ENCODE measurements at regions of chr10 and their contacts with region 1.

Region 1: DNA sequence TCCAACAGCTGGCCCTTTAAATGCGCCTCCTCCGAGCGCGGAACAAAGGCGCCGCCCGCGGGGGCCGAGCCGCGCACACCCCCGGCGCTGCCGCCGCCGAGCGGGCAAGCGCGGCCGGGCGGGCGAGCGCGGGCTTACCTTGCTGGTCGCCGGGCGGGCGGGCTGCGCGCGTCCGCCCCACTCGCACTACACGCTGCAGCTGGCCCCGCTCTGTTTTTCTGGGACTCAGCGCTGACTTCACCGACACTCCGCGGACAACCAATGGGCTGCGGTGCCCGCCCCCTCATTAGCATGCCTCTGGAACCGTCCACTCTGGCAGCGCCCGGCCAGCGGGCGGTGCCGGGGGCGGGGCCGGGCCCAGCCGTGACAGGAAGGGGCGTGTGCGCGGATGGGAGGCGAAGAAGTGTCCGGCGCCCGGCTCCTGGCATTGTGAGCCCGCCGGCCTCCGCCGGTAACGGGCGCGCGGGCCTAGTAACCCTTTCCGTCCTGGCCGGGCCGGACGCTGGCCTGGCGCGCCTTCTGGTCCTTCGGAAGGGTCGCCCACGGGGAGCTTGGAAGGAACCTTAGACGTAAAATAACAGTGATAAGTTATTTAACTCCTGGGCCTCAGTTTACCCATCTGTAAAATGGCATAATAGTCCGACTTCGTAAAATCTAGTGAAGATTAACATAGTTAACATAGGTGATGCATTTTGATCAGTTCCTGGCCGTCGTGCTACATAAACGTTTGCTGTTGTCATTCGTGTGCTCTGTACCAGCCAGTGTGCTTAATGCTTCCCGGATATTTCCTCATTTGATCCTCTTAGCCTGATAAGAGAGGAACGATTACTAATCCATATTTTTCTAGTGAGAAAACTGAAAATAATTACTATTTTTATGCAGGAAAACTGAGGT is at the start of gene SORBS1:
- DNase-seq: peak; percentile 98
- H3K4me3 ChIP-seq: peak within 1 kb of the TSS; percentile 74 to 94 (median 88)
- H3K27ac ChIP-seq: peak within 1 kb of the TSS; percentile 55
- H3K4me1 ChIP-seq: peaks cover 2% of the 10 kb centered on the region
- H3K27me3 ChIP-seq: peaks cover 2 to 7% of the 10 kb centered on the region in 2 experiments
- CTCF ChIP-seq: no peak
- POLR2A ChIP-seq: peak; percentile 65
- total RNA-seq, gene SORBS1: 3.2 and 7.9 TPM in 2 replicates

Region 2: DNA sequence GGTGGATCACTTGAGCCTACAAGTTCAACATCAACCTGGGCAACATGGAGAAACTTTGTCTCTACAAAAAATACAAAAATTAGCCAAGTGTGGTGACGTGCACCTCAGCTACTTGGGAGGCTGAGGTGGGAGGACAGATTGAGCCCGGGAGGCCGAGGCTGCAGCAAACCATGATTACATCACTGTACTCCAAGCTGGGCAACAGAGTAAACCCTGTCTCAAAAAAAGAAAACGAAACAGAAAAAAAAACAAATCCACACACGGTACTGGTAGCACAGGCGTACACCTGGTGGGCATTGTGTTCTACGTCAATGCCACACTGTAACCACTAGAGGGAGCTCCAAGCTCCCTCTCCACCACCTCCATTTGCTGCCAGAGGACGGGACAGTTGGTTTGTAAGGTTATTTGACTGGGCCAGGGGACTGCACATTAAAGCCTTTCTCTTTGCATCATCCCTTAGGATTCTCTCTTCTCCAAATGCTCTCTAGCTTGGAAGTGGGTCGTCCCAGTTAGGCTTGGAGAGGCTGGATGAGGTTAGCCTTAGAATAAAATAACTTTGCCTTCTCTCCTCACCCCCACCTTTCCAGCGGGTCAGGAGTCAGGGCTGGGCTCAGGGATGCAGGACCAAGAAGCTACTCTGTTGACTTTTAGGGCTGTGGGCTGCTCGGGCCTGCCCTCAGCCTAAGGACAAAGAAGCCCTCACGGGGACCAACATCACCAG is 131.0 kb before region 1 on chr10:
- CTCF ChIA-PET with region 1: interaction called, 6 read pairs
- POLR2A ChIA-PET with region 1: no interaction called
- dilution Hi-C with region 1: no loop called
- intact Hi-C with region 1: loop called (anchors 1 kb)
- DNase-seq: peak; percentile 61
- H3K4me3 ChIP-seq: no peak overlapping the region
- H3K27ac ChIP-seq: no peak overlapping the region
- H3K4me1 ChIP-seq: peaks cover 5% of the 10 kb centered on the region
- H3K27me3 ChIP-seq: peaks cover 0 to 2% of the 10 kb centered on the region in 2 experiments
- CTCF ChIP-seq: peak; percentile 89 to 95
- POLR2A ChIP-seq: no peak

Region 3: DNA sequence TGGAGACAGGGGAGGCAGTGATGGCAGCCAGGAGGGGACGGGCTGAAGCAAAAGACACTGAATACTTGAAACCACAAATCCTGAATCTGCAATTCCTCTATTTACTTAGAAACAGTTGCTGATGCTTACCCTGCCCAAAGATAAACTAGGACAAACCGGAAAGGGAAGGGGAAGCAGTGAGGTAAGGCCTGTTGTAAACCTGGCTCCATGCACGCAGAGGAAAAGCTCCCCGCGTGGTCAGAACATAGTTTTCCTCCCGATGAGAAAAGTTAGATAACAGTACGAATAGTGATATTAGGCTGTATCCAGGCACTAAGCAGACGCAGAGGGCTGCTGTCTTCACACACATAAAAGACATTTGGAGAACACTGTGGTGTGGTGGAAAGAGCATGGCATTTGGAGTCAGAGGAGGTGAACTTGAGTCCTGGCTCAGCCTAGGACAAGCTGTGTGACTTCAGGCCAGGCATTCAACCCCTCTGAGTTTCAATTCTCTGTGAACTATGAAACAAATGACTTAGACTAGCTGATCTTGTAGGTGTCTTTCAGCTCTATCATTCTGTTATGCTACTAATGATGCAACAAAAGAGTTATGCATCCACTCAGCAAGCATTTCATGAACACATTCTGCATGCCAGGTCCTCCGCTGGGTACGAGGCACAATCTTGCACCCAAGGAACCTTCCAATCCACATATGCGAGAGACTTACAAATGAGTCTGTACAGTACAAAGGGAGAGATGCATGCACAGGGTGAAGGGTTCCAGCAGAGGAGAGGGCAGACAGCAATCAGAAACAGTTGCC is 81.1 kb before region 1 on chr10:
- CTCF ChIA-PET with region 1: interaction called, 4 read pairs
- POLR2A ChIA-PET with region 1: no interaction called
- dilution Hi-C with region 1: no loop called
- intact Hi-C with region 1: loop called (anchors 1 kb)
- DNase-seq: peak; percentile 67
- H3K4me3 ChIP-seq: no peak overlapping the region
- H3K27ac ChIP-seq: peak overlapping the region; percentile 45
- H3K4me1 ChIP-seq: peaks cover 25% of the 10 kb centered on the region
- H3K27me3 ChIP-seq: no peaks in the 10 kb centered on the region
- CTCF ChIP-seq: peak in 1 of 2 donors; percentile 13
- POLR2A ChIP-seq: no peak

Region 4: DNA sequence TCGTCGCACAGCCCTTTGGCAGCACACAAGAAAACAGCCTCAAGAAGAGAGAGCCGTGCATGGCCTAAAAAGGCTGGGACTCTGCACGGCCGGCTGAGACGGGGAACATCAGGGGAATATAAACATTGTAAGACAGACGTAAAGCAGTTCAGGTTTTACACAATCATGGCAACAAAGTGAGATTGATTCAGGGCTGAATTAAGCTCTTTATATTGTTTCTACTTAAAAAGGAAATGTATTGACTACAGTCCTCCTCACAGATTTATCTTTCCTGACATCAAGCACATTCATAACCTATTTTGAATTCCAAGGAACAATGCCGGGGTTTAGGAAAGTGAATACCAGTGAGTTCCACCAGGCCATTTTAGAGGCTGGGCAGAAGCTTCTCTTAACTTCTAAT is 25.4 kb before region 1 on chr10:
- CTCF ChIA-PET with region 1: interaction called, 3 read pairs
- POLR2A ChIA-PET with region 1: no interaction called
- dilution Hi-C with region 1: no loop called
- intact Hi-C with region 1: loop called (anchors 1 kb)
- DNase-seq: peak; percentile 74
- H3K4me3 ChIP-seq: no peak overlapping the region
- H3K27ac ChIP-seq: peak overlapping the region; percentile 14
- H3K4me1 ChIP-seq: peaks cover 28% of the 10 kb centered on the region
- H3K27me3 ChIP-seq: no peaks in the 10 kb centered on the region
- CTCF ChIP-seq: no peak
- POLR2A ChIP-seq: no peak

Region 5: DNA sequence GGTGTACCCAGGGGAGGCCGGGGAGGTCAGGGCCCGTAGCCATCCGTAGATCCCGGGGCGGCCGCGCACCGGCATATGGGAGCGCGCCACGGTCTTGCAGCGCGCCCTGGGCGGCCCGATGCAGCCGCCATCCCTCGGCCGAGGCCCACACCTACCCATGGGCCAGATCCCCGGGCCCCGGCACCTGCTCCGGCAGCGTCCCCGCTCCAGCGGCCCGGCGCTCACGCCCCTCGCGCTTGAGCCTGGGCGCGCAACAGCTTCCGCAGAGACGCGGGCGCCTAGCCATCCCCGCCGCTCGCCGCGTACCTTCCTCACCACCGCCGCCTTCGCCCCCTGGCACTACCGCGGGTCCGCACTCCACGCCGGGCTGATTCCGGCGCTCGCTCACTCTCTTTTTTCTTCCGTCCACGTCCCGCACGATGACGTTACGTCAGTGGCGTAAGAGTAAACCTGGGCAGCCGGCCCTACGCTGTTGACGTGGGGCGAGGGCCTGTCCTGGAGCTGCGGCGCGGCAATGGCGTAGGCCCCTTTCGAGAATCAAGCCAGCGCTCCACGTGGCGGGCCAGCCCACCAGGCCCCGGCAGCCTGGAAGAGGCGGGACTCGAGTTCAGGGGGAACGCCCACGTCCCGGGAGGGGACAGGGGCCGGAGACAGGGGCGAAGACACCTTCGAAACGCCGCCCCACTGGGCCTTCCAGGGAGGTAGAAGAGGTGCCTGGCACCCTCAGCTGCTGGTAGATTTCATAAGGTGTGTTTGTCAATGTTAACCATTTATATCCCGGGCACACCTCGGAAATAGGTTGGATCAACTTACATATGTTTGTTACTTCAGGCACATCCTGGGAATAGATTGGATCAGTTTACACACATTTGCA is 95.1 kb after region 1 on chr10 and contains the start of gene ALDH18A1:
- CTCF ChIA-PET with region 1: no interaction called
- POLR2A ChIA-PET with region 1: no interaction called
- dilution Hi-C with region 1: no loop called
- intact Hi-C with region 1: loop called (anchors 2 kb)
- DNase-seq: peak; percentile 93
- H3K4me3 ChIP-seq: peak within 1 kb of the TSS; percentile 73 to 93 (median 89)
- H3K27ac ChIP-seq: peak within 1 kb of the TSS; percentile 64
- H3K4me1 ChIP-seq: peaks cover 11% of the 10 kb centered on the region
- H3K27me3 ChIP-seq: no peaks in the 10 kb centered on the region
- CTCF ChIP-seq: no peak
- POLR2A ChIP-seq: peak; percentile 78
- total RNA-seq, gene ALDH18A1: 88.9 and 92.6 TPM in 2 replicates

Region 6: DNA sequence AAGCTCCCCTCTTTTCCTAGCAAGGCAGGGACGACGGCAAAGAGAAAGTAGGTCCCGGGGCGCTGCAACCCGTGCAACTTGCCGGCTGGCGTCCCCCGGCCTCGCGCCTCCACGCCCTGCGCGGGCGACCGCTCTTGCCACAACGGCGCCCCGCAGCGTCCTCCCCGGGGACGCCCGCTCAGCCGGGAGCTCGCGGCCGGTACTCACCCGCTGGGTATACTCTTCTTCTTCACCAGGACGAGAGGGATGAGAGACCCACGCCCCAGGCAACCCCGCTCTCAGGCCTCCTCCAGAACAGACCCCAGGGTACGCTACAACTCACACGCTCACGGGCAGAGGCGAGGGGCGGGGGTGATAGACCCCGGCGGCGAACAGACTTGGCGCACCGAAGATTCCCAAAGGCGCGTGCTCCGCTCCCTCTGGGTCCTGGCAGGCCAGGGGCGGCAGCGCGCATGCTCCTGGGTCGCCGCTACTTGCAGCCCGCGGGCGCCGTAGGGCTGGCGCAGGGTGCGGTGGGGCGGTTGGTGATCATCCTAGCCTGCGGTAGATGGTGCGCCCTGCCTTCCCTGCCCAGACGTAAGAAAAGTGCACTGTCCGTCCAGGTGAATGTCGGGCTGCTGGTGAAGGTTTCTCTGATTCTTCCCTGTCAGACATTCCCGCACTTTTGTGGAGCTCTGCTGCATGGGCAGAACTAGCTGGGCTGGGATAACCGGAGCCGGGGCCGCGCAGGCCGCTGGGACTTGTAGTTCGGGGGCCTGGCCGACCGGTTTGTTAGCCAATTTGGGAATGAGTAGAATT is 346.2 kb after region 1 on chr10 and contains the start of gene CC2D2B:
- CTCF ChIA-PET with region 1: no interaction called
- POLR2A ChIA-PET with region 1: no interaction called
- dilution Hi-C with region 1: no loop called
- intact Hi-C with region 1: no loop called
- DNase-seq: peak; percentile 89
- H3K4me3 ChIP-seq: peak within 1 kb of the TSS; percentile 15 to 80 (median 68)
- H3K27ac ChIP-seq: peak within 1 kb of the TSS; percentile 16
- H3K4me1 ChIP-seq: peaks cover 4% of the 10 kb centered on the region
- H3K27me3 ChIP-seq: peaks cover 0 to 1% of the 10 kb centered on the region in 2 experiments
- CTCF ChIP-seq: peak; percentile 22
- POLR2A ChIP-seq: peak; percentile 77
- total RNA-seq, gene CC2D2B: 0.53 and 1.2 TPM in 2 replicates

Measured in endothelial cell of umbilical vein (primary cell).